Right cardiac atrium (tissue), 5 donors: ENCODE measurements at regions of chr1 and their contacts with region 1.

Region 1: GRCh38 chr1:208093754-208094719 is 150.1 kb downstream of the PLXNA2 start:
- DNase-seq: peak; percentile 67 to 92 (median 85)
- ATAC-seq: peak; percentile 50 to 66
- H3K4me3 ChIP-seq: no peak overlapping the region
- H3K27ac ChIP-seq: no peak overlapping the region
- H3K4me1 ChIP-seq: peaks cover 6% of the 10 kb centered on the region
- H3K27me3 ChIP-seq: no peaks in the 10 kb centered on the region

Region 2: GRCh38 chr1:208015255-208015654 is 78.8 kb before region 1 on chr1:
- intact Hi-C with region 1: loop called in 3 of 4 experiments (anchors 2 to 5 kb)
- DNase-seq: no peak
- ATAC-seq: no peak
- H3K4me3 ChIP-seq: no peak overlapping the region
- H3K27ac ChIP-seq: no peak overlapping the region
- H3K4me1 ChIP-seq: no peaks in the 10 kb centered on the region
- H3K27me3 ChIP-seq: no peaks in the 10 kb centered on the region

Region 3: DNA sequence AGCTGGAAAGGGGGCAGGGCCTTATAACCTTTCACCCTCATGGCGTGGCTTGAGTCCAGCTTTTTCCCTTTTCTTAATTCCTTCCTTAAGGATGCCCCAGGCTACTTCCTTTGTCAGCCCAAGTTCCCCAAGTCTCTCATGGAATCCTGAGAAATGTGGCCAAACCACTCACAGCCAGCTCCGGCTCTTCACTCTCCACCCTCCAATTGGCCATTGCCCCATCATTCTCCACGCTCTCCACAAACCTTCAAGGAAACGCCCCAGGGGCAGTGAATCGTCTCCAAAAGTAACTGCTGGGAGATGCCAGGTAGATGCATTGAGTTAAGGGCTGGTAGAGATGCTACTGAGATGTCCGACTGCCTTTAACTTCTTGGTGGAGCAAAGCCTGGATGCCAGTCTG is 69.6 kb before region 1 on chr1:
- intact Hi-C with region 1: loop called in 2 of 4 experiments (anchors 5 kb)
- DNase-seq: no peak
- ATAC-seq: no peak
- H3K4me3 ChIP-seq: no peak overlapping the region
- H3K27ac ChIP-seq: no peak overlapping the region
- H3K4me1 ChIP-seq: no peaks in the 10 kb centered on the region
- H3K27me3 ChIP-seq: no peaks in the 10 kb centered on the region

Region 4: DNA sequence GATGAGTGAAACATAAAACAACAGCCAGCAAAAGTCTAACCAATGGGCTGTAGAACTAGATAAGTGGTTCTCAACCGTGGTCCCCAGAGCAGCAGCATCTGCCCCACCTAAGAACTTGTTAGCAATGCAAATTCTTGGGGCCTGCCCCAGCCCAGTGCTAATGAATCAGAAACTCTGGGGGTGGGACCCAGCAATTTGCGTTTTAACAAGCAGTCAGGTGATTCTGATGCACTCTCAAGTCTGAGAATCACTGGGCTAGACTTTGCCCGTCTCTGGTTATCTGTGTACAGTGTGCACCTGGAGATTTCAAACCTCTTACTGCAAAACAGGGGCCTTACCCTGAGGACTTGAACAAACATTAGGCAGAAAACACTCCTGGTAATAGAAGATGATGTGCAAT is 83.6 kb after region 1 on chr1:
- intact Hi-C with region 1: no loop called
- DNase-seq: no peak
- ATAC-seq: no peak
- H3K4me3 ChIP-seq: no peak overlapping the region
- H3K27ac ChIP-seq: no peak overlapping the region
- H3K4me1 ChIP-seq: peaks cover 24% of the 10 kb centered on the region
- H3K27me3 ChIP-seq: no peaks in the 10 kb centered on the region

Region 5: GRCh38 chr1:208279826-208280588 is 186.0 kb after region 1 on chr1:
- intact Hi-C with region 1: no loop called
- DNase-seq: no peak
- ATAC-seq: peak in 1 of 2 donors; percentile 31
- H3K4me3 ChIP-seq: no peak overlapping the region
- H3K27ac ChIP-seq: no peak overlapping the region
- H3K4me1 ChIP-seq: no peaks in the 10 kb centered on the region
- H3K27me3 ChIP-seq: no peaks in the 10 kb centered on the region